ENCODE measurements at regions of chr2 and their contacts with region 1.

Region 1: DNA sequence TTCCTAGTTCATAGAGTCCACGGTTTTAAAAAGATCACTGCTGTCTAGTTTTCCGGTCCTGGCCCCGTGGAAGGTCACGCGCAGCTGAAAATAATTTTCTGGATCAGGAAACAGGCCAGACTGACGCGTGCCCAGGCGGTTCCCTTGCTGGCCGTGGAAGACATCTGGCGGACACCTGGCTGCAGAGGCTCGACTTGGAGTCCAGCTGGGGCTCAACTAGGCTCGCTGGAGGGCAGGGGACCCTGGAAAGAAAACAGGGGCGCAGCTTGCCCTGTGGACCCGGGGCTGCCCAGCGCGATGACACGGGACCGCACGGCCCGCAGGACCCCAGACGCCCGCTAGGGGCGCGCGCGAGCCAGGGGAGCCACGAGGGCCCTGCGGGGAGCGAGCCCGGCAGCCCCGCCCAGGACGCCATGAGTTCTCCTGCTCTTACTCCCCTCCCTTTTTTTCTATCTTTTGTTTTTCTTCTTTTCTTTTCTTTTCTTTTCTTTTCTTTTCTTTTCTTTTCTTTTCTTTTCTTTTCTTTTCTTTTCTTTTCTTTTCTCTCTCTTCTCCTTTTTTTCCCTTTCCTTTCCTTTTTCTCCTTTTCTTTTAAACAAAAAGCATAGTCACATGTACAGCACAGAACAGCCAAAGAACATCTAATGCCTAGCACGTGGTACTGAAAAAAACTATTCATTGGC is 43.2 kb upstream of the UBE2F start:
- DNase-seq: peak; percentile 93
- H3K4me3 ChIP-seq: peak overlapping the region in 3 of 4 donors; percentile 26 to 32 (median 27)
- H3K27ac ChIP-seq: peak overlapping the region; percentile 56 to 78 (median 64)
- H3K4me1 ChIP-seq: peaks cover 0 to 19% (median 14%) of the 10 kb centered on the region in 4 donors
- H3K27me3 ChIP-seq: no peaks in the 10 kb centered on the region
- CTCF ChIP-seq: peak; percentile 70 to 96 (median 93)
- EP300 ChIP-seq: no peak
- POLR2A ChIP-seq: no peak

Region 2: DNA sequence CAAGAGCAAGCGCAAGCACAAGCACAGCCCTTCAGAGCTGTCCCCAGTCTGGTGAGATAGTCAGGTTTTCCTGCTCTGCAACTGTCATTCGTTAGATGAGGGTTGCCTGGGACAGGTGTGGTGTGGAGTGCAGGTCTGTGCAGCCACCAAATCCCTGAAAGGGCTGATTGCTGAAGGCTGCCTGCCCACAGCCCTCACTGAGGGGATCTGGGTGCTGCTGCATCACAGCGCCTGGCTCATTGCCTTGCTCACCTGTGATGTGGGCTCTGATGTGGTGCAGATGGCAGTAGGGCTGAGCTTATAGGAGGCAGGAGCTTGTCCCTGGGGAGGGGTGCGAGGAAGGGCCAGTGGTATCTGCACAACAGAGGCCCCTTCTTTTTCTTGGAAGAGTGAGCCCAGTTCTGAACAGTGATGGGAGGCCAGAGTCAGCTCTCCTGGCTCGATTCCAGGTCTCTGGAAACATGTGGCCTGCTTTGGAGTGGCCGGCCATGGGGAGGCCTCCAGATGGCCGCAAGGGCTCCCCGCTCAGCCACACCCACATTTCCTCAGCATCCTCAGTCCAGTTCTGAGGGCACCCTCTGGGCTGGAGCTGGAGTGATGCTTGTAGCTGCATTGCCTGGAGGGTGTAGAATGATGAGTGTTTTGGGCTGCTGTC is 54.6 kb after region 1 on chr2:
- intact Hi-C with region 1: no loop called
- DNase-seq: peak; percentile 71
- H3K4me3 ChIP-seq: no peak overlapping the region
- H3K27ac ChIP-seq: no peak overlapping the region
- H3K4me1 ChIP-seq: peaks cover 0 to 38% (median 24%) of the 10 kb centered on the region in 4 donors
- H3K27me3 ChIP-seq: no peaks in the 10 kb centered on the region
- CTCF ChIP-seq: no peak
- EP300 ChIP-seq: no peak
- POLR2A ChIP-seq: no peak

Region 3: DNA sequence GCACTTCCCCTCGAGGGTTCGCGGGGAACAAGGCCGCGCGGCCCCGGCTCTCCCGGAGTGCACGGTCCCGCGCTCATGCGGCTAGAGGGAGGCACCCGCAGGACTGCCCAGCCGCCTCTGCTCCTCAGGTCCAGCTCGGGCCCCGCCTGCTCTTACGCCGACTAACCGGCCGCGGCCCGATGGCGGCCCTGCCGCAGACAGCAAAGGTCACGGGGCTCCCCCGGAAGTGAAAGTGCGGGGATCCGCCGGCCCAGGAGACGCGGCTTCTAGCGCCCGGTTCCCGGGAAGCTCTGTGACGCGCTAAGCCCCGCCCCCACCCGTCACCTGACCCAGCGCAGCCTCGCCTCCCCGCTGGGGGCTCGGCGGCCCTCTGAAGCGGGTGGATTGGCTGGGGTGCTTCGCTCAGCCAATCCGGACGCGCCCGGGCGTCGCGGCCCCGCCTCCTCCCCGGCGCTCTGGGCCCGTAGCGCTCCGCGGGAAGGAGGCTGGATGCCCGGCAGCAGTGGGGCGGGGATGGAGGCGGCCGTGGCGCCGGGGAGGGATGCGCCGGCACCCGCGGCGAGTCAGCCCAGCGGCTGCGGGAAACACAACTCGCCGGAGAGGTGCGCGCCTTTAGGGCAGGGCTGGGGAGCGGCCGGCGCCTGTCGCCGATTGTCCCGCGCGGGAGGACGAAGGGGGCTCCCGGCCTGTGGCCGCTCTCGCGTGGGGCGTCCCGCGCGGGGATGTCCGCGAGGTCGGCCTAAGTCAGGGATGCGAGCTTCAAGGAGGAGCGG is 137.1 kb after region 1 on chr2 and contains the start of gene SCLY:
- intact Hi-C with region 1: loop called (anchors 5 kb)
- DNase-seq: peak; percentile 99
- H3K4me3 ChIP-seq: peak within 1 kb of the TSS; percentile 72 to 91 (median 82)
- H3K27ac ChIP-seq: peak within 1 kb of the TSS; percentile 84 to 96 (median 94)
- H3K4me1 ChIP-seq: peaks cover 0 to 25% (median 16%) of the 10 kb centered on the region in 4 donors
- H3K27me3 ChIP-seq: no peaks in the 10 kb centered on the region
- CTCF ChIP-seq: no peak
- EP300 ChIP-seq: peak in 1 of 4 donors; percentile 39
- POLR2A ChIP-seq: peak; percentile 83 to 89
- total RNA-seq, gene SCLY: 10.3 to 14.4 (median 11.7) TPM